A673 (cell line): ENCODE measurements at regions of chr6 and their contacts with region 1.

Region 1: GRCh38 chr6:42928986-42929820 is at the start of gene CNPY3:
- DNase-seq: peak; percentile 99
- H3K4me3 ChIP-seq: peak within 1 kb of the TSS; percentile 61
- H3K27ac ChIP-seq: peak within 1 kb of the TSS; percentile 91
- H3K4me1 ChIP-seq: peaks cover 27% of the 10 kb centered on the region
- H3K27me3 ChIP-seq: no peaks in the 10 kb centered on the region
- CTCF ChIP-seq: no peak
- total RNA-seq, gene CNPY3: 34.5 and 37.7 TPM in 2 replicates

Region 2: DNA sequence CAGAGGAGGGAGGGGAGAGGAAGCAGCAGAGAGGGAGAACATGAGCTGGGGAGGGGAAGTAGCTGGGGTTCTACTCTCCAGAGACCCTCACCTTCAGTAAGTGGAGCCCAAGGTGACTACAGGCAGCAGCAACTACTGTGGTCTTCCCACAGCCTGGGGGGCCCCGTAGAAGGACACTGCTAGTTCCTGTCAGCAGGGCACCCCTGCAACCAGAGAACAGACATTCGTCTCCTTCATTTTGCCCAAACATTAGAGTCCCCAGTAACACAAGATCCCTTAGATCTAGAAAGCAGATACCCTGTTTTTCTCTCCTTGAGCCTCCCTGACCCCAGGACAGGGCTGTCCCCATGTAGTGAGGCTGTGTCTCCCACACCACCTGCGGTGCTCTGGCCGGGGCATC is 39.6 kb after region 1 on chr6:
- CTCF ChIA-PET with region 1: no interaction called
- POLR2A ChIA-PET with region 1: interaction called, 11 read pairs
- intact Hi-C with region 1: no loop called
- DNase-seq: no peak
- H3K4me3 ChIP-seq: no peak overlapping the region
- H3K27ac ChIP-seq: no peak overlapping the region
- H3K4me1 ChIP-seq: peaks cover 10% of the 10 kb centered on the region
- H3K27me3 ChIP-seq: no peaks in the 10 kb centered on the region
- CTCF ChIP-seq: no peak

Region 3: DNA sequence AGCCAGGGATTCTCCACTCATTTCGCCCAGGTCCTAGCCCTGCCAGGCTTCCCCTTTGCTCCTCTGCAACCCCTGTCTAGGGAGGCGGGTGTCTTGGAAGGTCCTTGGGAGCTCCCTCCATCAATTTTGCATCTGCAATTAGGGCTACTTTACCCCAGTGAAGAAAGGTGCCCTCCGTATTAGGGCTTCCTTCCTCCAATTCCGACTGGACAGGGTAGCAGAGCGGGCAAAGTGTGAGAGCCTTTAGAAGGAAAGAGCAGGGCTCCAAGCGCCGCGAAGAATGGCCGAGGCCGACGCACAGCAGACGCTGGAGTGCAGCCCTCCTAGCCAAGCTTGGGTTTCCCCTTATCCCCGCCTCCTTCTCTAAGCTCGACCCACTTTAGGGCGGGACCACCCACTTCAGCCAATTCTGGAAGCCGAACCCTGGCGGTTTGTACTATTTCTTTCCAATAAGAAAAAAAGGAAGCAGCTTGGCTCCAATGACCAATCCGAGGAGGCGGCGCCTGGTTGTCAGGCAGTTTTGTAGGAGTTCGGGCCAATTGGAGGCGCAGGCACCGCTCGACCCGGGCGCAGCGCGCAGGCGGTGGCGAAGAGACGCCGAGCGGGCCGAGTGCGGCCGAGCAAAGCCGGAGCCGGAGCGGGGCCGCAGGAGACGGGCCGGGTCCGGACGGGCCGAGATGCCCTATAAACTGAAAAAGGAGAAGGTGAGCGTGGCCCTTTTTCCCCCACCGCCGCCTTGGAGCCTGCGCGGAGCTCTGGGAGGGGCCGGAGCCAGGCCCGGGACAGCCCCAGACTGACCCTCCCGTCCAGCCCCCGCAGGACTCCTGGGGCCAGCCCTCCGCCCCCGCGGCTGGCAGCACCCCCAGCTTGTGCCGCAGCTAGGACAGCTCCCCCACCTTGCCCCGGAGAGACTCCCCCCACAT is 55.1 kb after region 1 on chr6 and contains the start of gene PPP2R5D:
- CTCF ChIA-PET with region 1: no interaction called
- POLR2A ChIA-PET with region 1: interaction called, 22 read pairs
- intact Hi-C with region 1: no loop called
- DNase-seq: peak; percentile 100
- H3K4me3 ChIP-seq: peak within 1 kb of the TSS; percentile 90
- H3K27ac ChIP-seq: peak within 1 kb of the TSS; percentile 92
- H3K4me1 ChIP-seq: peaks cover 13% of the 10 kb centered on the region
- H3K27me3 ChIP-seq: no peaks in the 10 kb centered on the region
- CTCF ChIP-seq: no peak
- total RNA-seq, gene PPP2R5D: 73.6 and 77.1 TPM in 2 replicates

Region 4: GRCh38 chr6:42993445-42993844 is 64.2 kb after region 1 on chr6:
- CTCF ChIA-PET with region 1: no interaction called
- POLR2A ChIA-PET with region 1: interaction called, 13 read pairs
- intact Hi-C with region 1: no loop called
- DNase-seq: no peak
- H3K4me3 ChIP-seq: no peak overlapping the region
- H3K27ac ChIP-seq: no peak overlapping the region
- H3K4me1 ChIP-seq: no peaks in the 10 kb centered on the region
- H3K27me3 ChIP-seq: no peaks in the 10 kb centered on the region
- CTCF ChIP-seq: no peak